HepG2 (cell line): ENCODE measurements at regions of chr17 and their contacts with region 1.

Region 1: DNA sequence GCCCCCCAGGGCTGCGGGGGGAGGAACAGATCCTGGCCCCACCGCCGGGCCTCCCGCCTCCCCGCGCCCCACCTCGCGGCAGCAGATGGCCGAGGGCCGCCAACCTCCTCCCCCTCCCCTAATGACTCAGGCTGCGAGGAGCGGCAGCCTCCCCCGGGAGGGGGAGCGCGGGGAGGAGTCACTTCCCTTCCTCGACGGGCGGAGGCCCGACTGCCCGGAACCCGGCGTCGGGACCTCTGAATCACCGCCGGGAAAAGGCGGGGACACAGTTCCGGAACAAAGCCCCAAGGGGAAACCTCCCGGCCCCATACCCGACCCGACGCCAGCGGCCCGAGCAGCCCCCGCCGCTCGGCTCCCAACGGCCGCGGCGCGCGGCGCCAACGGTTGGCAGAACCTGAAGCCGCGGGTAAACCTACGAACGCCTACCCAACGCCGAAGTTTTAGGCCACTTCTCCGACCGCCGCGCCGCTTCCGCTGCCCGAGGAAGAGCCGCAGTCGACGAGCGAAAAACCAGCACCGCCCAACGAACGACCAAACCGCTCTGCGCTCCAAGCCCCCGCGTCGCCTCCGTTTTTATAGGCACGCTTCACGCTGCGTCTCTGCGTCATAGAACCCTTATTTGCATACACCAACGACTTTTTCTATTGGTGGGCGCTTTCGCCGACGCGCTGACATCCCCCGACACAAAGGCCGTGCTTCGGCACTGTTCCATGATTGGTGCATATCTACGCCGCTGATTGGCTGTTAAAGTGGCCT is 5.2 kb upstream of the UNK start:
- DNase-seq: peak; percentile 100
- ATAC-seq: peak; percentile 81
- H3K4me3 ChIP-seq: peak overlapping the region; percentile 73 to 92 (median 86)
- H3K27ac ChIP-seq: peak overlapping the region; percentile 91
- H3K4me1 ChIP-seq: peaks cover 58% of the 10 kb centered on the region
- H3K27me3 ChIP-seq: no peaks in the 10 kb centered on the region; a peak in 1 of 5 replicates
- CTCF ChIP-seq: no peak
- EP300 ChIP-seq: peak in 1 of 2 experiments; percentile 12; a peak in 1 of 4 replicates
- POLR2A ChIP-seq: peak; percentile 100
- RAD21 ChIP-seq: peak; percentile 80

Region 2: DNA sequence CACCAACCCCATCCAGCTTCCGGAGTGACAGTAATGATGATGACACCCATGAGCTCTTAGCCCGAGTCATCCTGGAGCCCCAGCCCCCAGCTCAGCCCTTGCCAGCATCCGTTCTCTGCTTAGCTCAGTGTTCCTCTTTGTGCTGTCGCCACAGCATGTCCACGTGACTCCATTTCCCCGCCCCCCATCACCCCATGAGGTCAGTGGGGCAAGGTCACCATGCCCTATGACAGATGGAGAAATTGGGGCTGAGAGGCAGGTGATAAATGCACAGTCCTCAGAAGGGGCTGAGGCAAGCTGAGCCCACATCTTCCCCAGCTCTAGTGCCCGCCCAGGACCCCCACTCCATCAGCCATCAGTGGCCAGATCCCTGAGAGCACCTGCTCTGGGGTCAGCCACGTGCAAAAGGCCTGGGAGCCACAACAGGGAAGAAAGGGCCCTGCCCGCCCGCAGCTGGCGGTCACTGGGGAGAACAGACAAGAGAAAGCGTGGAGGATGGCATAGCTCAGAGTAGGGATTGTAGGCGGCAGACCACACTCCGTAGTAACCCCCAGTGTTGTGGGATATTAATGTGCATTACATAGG is 41.1 kb before region 1 on chr17:
- CTCF ChIA-PET with region 1: no interaction called
- POLR2A ChIA-PET with region 1: interaction called, 21 read pairs
- in situ Hi-C with region 1: no loop called
- intact Hi-C with region 1: no loop called
- DNase-seq: peak; percentile 57
- ATAC-seq: peak; percentile 33
- H3K4me3 ChIP-seq: peak overlapping the region in 1 of 3 experiments; percentile 8; a peak in 1 of 6 replicates
- H3K27ac ChIP-seq: no peak overlapping the region
- H3K4me1 ChIP-seq: peaks cover 52% of the 10 kb centered on the region
- H3K27me3 ChIP-seq: peaks cover 0 to 4% of the 10 kb centered on the region in 2 experiments; a peak in 2 of 5 replicates
- CTCF ChIP-seq: 0 out of 2 replicates have a peak, but pooled peaks have one; percentile 8
- EP300 ChIP-seq: peak in 1 of 2 experiments; percentile 43; a peak in 1 of 4 replicates
- POLR2A ChIP-seq: no peak
- RAD21 ChIP-seq: no peak

Region 3: DNA sequence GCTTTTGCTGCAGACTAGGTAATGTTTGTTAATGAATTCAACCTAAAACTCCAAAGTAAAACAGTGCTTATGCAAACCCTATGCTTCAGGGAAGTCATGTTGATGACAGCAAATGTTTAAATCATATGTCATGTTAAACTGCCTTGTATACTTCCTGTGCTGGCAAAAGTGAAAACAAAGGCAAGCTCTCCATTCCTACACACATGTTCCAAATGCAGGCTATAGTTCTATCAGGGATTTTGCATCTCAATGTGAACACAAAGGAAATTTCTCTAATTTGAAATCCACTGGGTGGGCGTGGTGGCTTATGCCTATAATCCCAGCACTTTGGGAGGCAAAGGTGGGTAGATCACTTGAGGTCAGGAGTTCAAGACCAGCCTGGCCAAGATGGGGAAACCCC is 24.5 kb after region 1 on chr17:
- CTCF ChIA-PET with region 1: no interaction called
- POLR2A ChIA-PET with region 1: interaction called, 14 read pairs
- in situ Hi-C with region 1: no loop called
- intact Hi-C with region 1: no loop called
- DNase-seq: no peak
- ATAC-seq: no peak
- H3K4me3 ChIP-seq: no peak overlapping the region
- H3K27ac ChIP-seq: no peak overlapping the region
- H3K4me1 ChIP-seq: no peaks in the 10 kb centered on the region
- H3K27me3 ChIP-seq: no peaks in the 10 kb centered on the region
- CTCF ChIP-seq: no peak
- EP300 ChIP-seq: no peak
- POLR2A ChIP-seq: no peak
- RAD21 ChIP-seq: no peak

Region 4: GRCh38 chr17:75827252-75828115 is 48.1 kb after region 1 on chr17:
- CTCF ChIA-PET with region 1: no interaction called
- POLR2A ChIA-PET with region 1: interaction called, 29 read pairs
- in situ Hi-C with region 1: no loop called
- intact Hi-C with region 1: loop called (anchors 5 kb)
- DNase-seq: peak; percentile 50
- ATAC-seq: peak; percentile 73
- H3K4me3 ChIP-seq: no peak overlapping the region
- H3K27ac ChIP-seq: peak overlapping the region; percentile 61
- H3K4me1 ChIP-seq: peaks cover 22% of the 10 kb centered on the region
- H3K27me3 ChIP-seq: no peaks in the 10 kb centered on the region
- CTCF ChIP-seq: peak; percentile 87
- EP300 ChIP-seq: no peak
- POLR2A ChIP-seq: no peak
- RAD21 ChIP-seq: peak; percentile 74

Region 5: GRCh38 chr17:75864448-75864871 is 85.1 kb after region 1 on chr17:
- CTCF ChIA-PET with region 1: no interaction called
- POLR2A ChIA-PET with region 1: interaction called, 86 read pairs
- in situ Hi-C with region 1: no loop called
- intact Hi-C with region 1: no loop called
- DNase-seq: no peak
- ATAC-seq: no peak
- H3K4me3 ChIP-seq: no peak overlapping the region
- H3K27ac ChIP-seq: no peak overlapping the region
- H3K4me1 ChIP-seq: peaks cover 69% of the 10 kb centered on the region
- H3K27me3 ChIP-seq: no peaks in the 10 kb centered on the region
- CTCF ChIP-seq: no peak
- EP300 ChIP-seq: no peak
- POLR2A ChIP-seq: no peak
- RAD21 ChIP-seq: no peak

Region 6: GRCh38 chr17:75940724-75941441 is 161.5 kb after region 1 on chr17 and contains the start of gene FBF1:
- CTCF ChIA-PET with region 1: no interaction called
- POLR2A ChIA-PET with region 1: interaction called, 10 read pairs
- in situ Hi-C with region 1: no loop called
- intact Hi-C with region 1: no loop called
- DNase-seq: peak; percentile 93
- ATAC-seq: peak; percentile 96
- H3K4me3 ChIP-seq: peak within 1 kb of the TSS; percentile 73 to 83 (median 79)
- H3K27ac ChIP-seq: peak within 1 kb of the TSS; percentile 49
- H3K4me1 ChIP-seq: peaks cover 27% of the 10 kb centered on the region
- H3K27me3 ChIP-seq: no peaks in the 10 kb centered on the region; a peak in 1 of 5 replicates
- CTCF ChIP-seq: peak; percentile 58
- EP300 ChIP-seq: peak in 1 of 2 experiments; percentile 31; a peak in 1 of 4 replicates
- POLR2A ChIP-seq: peak; percentile 89 to 94
- RAD21 ChIP-seq: peak; percentile 70
- total RNA-seq, gene FBF1: 3.5 and 8.1 TPM in 2 replicates

Region 7: GRCh38 chr17:76432712-76433336 is 653.4 kb after region 1 on chr17:
- CTCF ChIA-PET with region 1: no interaction called
- POLR2A ChIA-PET with region 1: no interaction called
- in situ Hi-C with region 1: no loop called
- intact Hi-C with region 1: no loop called
- DNase-seq: peak; percentile 41
- ATAC-seq: peak; percentile 81
- H3K4me3 ChIP-seq: no peak overlapping the region
- H3K27ac ChIP-seq: no peak overlapping the region
- H3K4me1 ChIP-seq: peaks cover 22% of the 10 kb centered on the region
- H3K27me3 ChIP-seq: no peaks in the 10 kb centered on the region
- CTCF ChIP-seq: 0 out of 2 replicates have a peak, but pooled peaks have one; percentile 15
- EP300 ChIP-seq: no peak
- POLR2A ChIP-seq: no peak
- RAD21 ChIP-seq: no peak